ENCODE measurements at regions of chr12 and their contacts with region 1.

Region 1: GRCh38 chr12:107635139-107635538 is 50.5 kb upstream of the PWP1 start:
- DNase-seq: peak; percentile 38
- H3K4me3 ChIP-seq: no peak overlapping the region
- H3K27ac ChIP-seq: no peak overlapping the region
- H3K4me1 ChIP-seq: no peaks in the 10 kb centered on the region
- H3K27me3 ChIP-seq: no peaks in the 10 kb centered on the region
- CTCF ChIP-seq: no peak
- POLR2A ChIP-seq: no peak

Region 2: GRCh38 chr12:107645630-107646333 is 10.6 kb after region 1 on chr12:
- CTCF ChIA-PET with region 1: no interaction called
- POLR2A ChIA-PET with region 1: interaction called, 11 read pairs
- dilution Hi-C with region 1: no loop called
- intact Hi-C with region 1: no loop called
- DNase-seq: peak; percentile 85
- H3K4me3 ChIP-seq: no peak overlapping the region
- H3K27ac ChIP-seq: no peak overlapping the region
- H3K4me1 ChIP-seq: no peaks in the 10 kb centered on the region
- H3K27me3 ChIP-seq: no peaks in the 10 kb centered on the region
- CTCF ChIP-seq: no peak
- POLR2A ChIP-seq: no peak